Head of caudate nucleus (tissue), 42 donors: ENCODE measurements at regions of chr3 and their contacts with region 1.

Region 1: GRCh38 chr3:156017352-156018030 is 102.9 kb upstream of the KCNAB1 start:
- DNase-seq: no peak

Region 2: GRCh38 chr3:155835341-155836071 is 182.0 kb before region 1 on chr3:
- intact Hi-C with region 1: no loop called
- DNase-seq: no peak

Region 3: GRCh38 chr3:155978324-155978723 is 39.2 kb before region 1 on chr3:
- intact Hi-C with region 1: no loop called
- DNase-seq: no peak

Region 4: GRCh38 chr3:156290924-156291271 is 273.4 kb after region 1 on chr3:
- intact Hi-C with region 1: no loop called
- DNase-seq: peak in 39 of 42 donors; percentile 14 to 86 (median 58)

Region 5: DNA sequence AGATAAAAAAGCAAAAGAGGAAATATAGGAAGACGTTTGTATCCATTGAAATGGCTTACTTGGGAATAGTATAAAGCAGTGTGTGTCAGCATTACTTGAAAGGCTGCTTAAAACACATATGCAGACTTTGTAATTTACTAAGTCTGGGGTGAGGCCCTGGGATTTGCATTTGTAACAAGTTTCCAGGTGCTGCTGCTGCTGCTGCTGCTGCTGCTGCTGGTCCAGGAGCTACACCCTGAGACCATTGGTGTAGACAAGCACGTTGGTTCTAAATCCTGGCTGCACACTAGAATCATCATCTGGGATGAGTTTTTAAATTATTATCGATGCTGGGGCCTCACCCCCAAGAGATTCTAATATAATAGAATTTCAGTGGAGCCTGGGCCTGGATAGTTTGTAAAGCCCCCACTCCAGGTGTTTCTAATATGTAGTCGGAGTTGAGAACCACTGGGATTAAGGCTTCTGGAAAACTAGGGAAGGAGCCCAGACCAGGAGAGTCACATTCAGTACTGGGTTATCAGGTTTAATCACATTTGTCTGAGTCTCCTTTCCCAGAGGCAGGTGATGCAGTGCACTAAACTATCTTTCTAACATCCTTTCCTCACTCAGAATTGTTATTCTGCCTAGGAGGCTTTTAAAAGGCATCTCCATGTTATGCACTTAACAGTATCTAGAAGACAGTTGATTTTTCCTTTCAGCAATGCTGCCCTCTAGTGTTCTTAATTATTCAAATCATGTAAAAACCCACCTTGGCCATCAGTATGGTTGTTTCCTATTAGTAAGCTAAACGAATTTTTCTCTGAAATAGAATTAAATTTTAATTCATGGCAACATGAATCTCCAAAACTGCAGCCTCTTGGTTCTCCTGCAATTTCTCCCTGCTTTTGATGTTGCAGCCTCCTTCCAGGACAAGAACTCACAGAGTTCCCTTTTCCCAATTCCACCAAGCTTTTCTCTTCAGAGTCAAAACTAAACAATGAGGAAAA is 492.0 kb after region 1 on chr3:
- intact Hi-C with region 1: loop called (anchors 5 kb)
- DNase-seq: peak in 1 of 42 donors; percentile 53